AG04449 (cell line): ENCODE measurements at regions of chr11 and their contacts with region 1.

Region 1: GRCh38 chr11:96464700-96465307 is 75.0 kb downstream of the JRKL start:
- DNase-seq: peak; percentile 24
- H3K4me3 ChIP-seq: no peak overlapping the region
- CTCF ChIP-seq: peak; percentile 53

Region 2: GRCh38 chr11:96447208-96448110 is 17.3 kb before region 1 on chr11:
- CTCF ChIA-PET with region 1: interaction called, 50 read pairs
- POLR2A ChIA-PET with region 1: no interaction called
- DNase-seq: no peak
- H3K4me3 ChIP-seq: no peak overlapping the region
- CTCF ChIP-seq: no peak